ENCODE measurements at regions of chr6 and their contacts with region 1.

Region 1: GRCh38 chr6:3748208-3749066 is 3.1 kb downstream of the PXDC1 start:
- DNase-seq: peak in 3 of 9 experiments; percentile 36 to 45 (median 37)
- ATAC-seq: no peak
- H3K4me3 ChIP-seq: no peak overlapping the region
- H3K4me3 Mint-ChIP-seq: no peak overlapping the region
- H3K27ac ChIP-seq: no peak overlapping the region
- H3K27ac Mint-ChIP-seq: no peak overlapping the region
- H3K4me1 ChIP-seq: peaks cover 4% of the 10 kb centered on the region
- H3K4me1 Mint-ChIP-seq: peaks cover 9% of the 10 kb centered on the region
- H3K27me3 ChIP-seq: peaks cover 11 to 21% of the 10 kb centered on the region in 2 experiments
- H3K27me3 Mint-ChIP-seq: peaks cover 32% of the 10 kb centered on the region
- CTCF ChIP-seq: peak; percentile 25

Region 2: GRCh38 chr6:3929281-3929798 is 180.9 kb after region 1 on chr6:
- CTCF ChIA-PET with region 1: interaction called, 33 read pairs
- POLR2A ChIA-PET with region 1: no interaction called
- intact Hi-C with region 1: no loop called
- DNase-seq: no peak
- ATAC-seq: no peak
- H3K4me3 ChIP-seq: no peak overlapping the region
- H3K4me3 Mint-ChIP-seq: no peak overlapping the region
- H3K27ac ChIP-seq: no peak overlapping the region
- H3K27ac Mint-ChIP-seq: no peak overlapping the region
- H3K4me1 ChIP-seq: no peaks in the 10 kb centered on the region
- H3K4me1 Mint-ChIP-seq: no peaks in the 10 kb centered on the region
- H3K27me3 ChIP-seq: no peaks in the 10 kb centered on the region
- H3K27me3 Mint-ChIP-seq: peaks cover 10% of the 10 kb centered on the region
- CTCF ChIP-seq: no peak